A673 (cell line): ENCODE measurements at regions of chr10 and their contacts with region 1.

Region 1: DNA sequence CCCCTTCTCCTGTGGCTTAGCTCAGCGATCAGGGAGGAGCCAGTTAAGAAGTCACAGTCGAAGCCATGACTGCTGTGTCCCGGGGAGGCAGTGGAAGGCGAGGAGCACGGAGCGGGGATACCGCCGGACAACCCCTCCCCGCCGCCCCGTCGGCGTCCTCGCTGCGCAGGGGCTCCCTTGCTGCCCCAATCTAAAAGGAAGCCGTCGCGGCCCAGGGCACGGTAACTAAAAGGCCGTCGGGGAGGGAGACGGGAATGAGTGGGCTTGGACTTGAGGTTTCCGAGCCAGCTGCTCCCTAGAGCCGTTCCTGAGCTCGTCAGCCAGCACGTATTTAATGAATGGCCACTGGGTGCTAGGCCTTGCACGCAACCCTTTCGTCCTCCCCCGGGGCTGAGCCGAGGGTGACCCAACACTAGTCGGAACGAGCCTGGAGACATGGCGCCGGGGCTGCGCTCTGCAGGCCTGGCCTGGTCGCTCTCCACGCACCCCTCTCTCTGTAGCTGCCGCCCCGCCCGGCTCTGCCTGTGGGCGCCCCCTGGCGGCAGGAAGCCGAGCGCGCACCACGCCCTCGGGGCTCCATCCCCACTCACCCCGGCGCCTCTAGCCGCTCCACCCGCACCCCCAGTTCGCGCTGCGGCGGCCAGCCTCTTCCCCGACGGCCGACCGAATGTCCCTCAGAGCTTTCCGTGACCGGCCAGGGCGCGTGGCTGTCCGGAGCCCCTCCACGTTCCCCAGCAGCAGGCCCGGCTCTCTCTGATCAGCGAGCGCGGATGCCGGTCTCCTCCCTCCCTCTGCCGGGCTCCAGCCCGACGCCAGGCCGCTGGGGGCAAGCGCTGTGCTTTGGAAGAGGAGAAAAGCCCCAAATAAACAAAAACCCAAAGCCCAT is 29.3 kb upstream of the KCNK18 start:
- DNase-seq: peak; percentile 84
- H3K4me3 ChIP-seq: peak overlapping the region; percentile 55
- H3K27ac ChIP-seq: peak overlapping the region; percentile 73
- H3K4me1 ChIP-seq: peaks cover 36% of the 10 kb centered on the region
- H3K27me3 ChIP-seq: no peaks in the 10 kb centered on the region
- CTCF ChIP-seq: peak; percentile 96

Region 2: GRCh38 chr10:116796910-116797513 is 371.0 kb before region 1 on chr10:
- CTCF ChIA-PET with region 1: interaction called, 28 read pairs
- POLR2A ChIA-PET with region 1: no interaction called
- intact Hi-C with region 1: no loop called
- DNase-seq: peak; percentile 93
- H3K4me3 ChIP-seq: no peak overlapping the region
- H3K27ac ChIP-seq: no peak overlapping the region
- H3K4me1 ChIP-seq: peaks cover 24% of the 10 kb centered on the region
- H3K27me3 ChIP-seq: no peaks in the 10 kb centered on the region
- CTCF ChIP-seq: peak; percentile 97

Region 3: DNA sequence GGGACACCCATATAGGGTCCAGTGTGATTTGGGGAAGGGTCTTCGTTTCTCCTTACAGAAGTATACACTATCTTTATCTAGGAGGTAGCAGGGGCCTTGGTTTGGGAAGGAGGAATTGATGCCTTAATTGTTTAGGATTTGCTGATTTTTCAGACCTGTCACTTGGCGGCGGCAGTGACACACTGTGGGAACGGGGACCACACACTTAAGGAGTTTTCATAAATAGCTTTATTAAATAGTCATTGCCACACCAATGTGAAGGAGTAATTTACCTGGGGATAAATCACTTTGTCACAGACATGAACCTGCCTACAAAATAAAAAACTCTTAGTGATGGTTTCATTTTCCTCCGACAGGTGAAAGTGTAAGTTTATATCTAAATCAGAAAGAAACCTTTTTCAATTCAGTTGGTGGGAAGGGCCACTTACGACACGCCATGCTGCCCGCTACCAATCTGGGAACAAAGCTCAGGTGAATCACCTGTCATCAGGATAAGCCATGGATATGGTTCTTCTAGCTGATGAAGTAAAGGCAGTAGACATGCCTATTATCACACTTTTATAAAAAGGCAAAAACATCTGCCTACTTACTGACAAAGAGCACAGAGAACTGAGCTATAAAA is 331.0 kb before region 1 on chr10:
- CTCF ChIA-PET with region 1: interaction called, 18 read pairs
- POLR2A ChIA-PET with region 1: interaction called, 3 read pairs
- intact Hi-C with region 1: loop called (anchors 1 kb)
- DNase-seq: peak; percentile 56
- H3K4me3 ChIP-seq: no peak overlapping the region
- H3K27ac ChIP-seq: no peak overlapping the region
- H3K4me1 ChIP-seq: peaks cover 42% of the 10 kb centered on the region
- H3K27me3 ChIP-seq: no peaks in the 10 kb centered on the region
- CTCF ChIP-seq: peak; percentile 63

Region 4: GRCh38 chr10:116891208-116891607 is 276.8 kb before region 1 on chr10:
- CTCF ChIA-PET with region 1: no interaction called
- POLR2A ChIA-PET with region 1: no interaction called
- intact Hi-C with region 1: loop called (anchors 5 kb)
- DNase-seq: peak; percentile 97
- H3K4me3 ChIP-seq: no peak overlapping the region
- H3K27ac ChIP-seq: peak overlapping the region; percentile 46
- H3K4me1 ChIP-seq: peaks cover 63% of the 10 kb centered on the region
- H3K27me3 ChIP-seq: no peaks in the 10 kb centered on the region
- CTCF ChIP-seq: no peak

Region 5: GRCh38 chr10:117074621-117075020 is 93.4 kb before region 1 on chr10:
- CTCF ChIA-PET with region 1: no interaction called
- POLR2A ChIA-PET with region 1: interaction called, 7 read pairs
- intact Hi-C with region 1: loop called (anchors 2 kb)
- DNase-seq: no peak
- H3K4me3 ChIP-seq: no peak overlapping the region
- H3K27ac ChIP-seq: no peak overlapping the region
- H3K4me1 ChIP-seq: peaks cover 40% of the 10 kb centered on the region
- H3K27me3 ChIP-seq: no peaks in the 10 kb centered on the region
- CTCF ChIP-seq: no peak

Region 6: DNA sequence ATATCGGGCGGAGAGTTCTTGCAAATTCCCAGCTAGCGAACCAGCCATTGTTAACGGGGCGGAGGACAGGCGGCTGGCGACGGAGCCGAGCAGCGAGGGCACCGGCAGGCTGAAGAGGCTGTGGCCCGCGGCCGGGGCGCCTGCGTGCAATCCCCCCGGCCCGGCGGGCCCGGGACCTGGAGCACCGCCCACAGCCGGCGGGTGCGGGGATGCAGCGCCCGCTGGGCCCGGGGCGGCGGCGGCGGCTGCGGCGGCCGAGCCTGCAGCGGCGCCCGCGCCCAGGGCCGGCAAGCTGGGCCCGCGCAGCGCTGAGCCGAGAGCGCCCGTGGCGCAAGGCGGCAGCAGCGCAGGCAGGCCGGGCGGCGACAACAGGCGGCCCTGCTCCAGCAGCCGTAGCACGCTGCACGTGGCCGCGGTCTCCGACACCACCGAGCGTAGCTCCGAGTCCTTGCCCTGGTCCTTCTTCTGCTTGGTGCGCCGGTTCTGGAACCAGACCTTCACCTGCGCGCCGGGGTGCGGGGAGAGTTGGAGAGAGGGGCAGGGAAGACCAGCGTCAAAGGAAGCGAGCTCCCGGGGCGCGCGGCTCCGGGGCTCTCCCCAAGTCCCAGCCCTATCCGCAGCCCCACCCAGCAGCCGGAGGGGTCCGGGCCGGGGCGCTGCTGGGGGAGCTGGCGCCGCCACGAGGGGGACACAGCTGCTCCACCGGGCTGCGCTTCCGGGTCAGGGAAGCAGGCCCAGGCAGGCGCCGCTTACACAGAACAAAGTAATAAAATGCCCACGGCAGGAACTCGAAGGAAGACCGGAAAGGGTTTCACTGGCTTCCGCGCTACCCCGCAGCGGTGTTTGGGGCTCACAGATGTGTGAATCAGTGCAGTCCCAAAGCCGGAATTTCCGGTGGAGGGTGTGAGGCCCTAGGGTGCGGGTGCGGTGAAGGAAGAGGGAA is 33.7 kb before region 1 on chr10:
- CTCF ChIA-PET with region 1: interaction called, 14 read pairs
- POLR2A ChIA-PET with region 1: interaction called, 3 read pairs
- intact Hi-C with region 1: loop called (anchors 2 kb)
- DNase-seq: peak; percentile 98
- H3K4me3 ChIP-seq: peak overlapping the region; percentile 97
- H3K27ac ChIP-seq: peak overlapping the region; percentile 100
- H3K4me1 ChIP-seq: peaks cover 71% of the 10 kb centered on the region
- H3K27me3 ChIP-seq: no peaks in the 10 kb centered on the region
- CTCF ChIP-seq: peak; percentile 48